ENCODE measurements at regions of chr20 and their contacts with region 1.

Region 1: GRCh38 chr20:45311589-45312211 is 3.6 kb upstream of the MATN4 start:
- DNase-seq: peak; percentile 92
- ATAC-seq: peak; percentile 68
- H3K4me3 Mint-ChIP-seq: peak overlapping the region; percentile 63
- H3K27ac Mint-ChIP-seq: no peak overlapping the region
- H3K4me1 Mint-ChIP-seq: peaks cover 15% of the 10 kb centered on the region
- H3K27me3 Mint-ChIP-seq: peaks cover 33% of the 10 kb centered on the region
- CTCF ChIP-seq: peak; percentile 71

Region 2: GRCh38 chr20:45300961-45301360 is 10.7 kb before region 1 on chr20:
- CTCF ChIA-PET with region 1: interaction called, 46 read pairs
- POLR2A ChIA-PET with region 1: interaction called, 3 read pairs
- DNase-seq: peak; percentile 82
- ATAC-seq: peak; percentile 96
- H3K4me3 Mint-ChIP-seq: no peak overlapping the region
- H3K27ac Mint-ChIP-seq: no peak overlapping the region
- H3K4me1 Mint-ChIP-seq: peaks cover 12% of the 10 kb centered on the region
- H3K27me3 Mint-ChIP-seq: peaks cover 10% of the 10 kb centered on the region
- CTCF ChIP-seq: peak; percentile 38; the same call in 1 of the 2 replicates

Region 3: GRCh38 chr20:45341939-45342859 is 30.5 kb after region 1 on chr20:
- CTCF ChIA-PET with region 1: interaction called, 11 read pairs
- POLR2A ChIA-PET with region 1: no interaction called
- DNase-seq: peak; percentile 82
- ATAC-seq: peak; percentile 72
- H3K4me3 Mint-ChIP-seq: peak overlapping the region; percentile 65
- H3K27ac Mint-ChIP-seq: peak overlapping the region; percentile 98
- H3K4me1 Mint-ChIP-seq: peaks cover 99% of the 10 kb centered on the region
- H3K27me3 Mint-ChIP-seq: no peaks in the 10 kb centered on the region
- CTCF ChIP-seq: no peak

Region 4: GRCh38 chr20:45347936-45348778 is 36.5 kb after region 1 on chr20 and contains the start of gene SDC4:
- CTCF ChIA-PET with region 1: interaction called, 11 read pairs
- POLR2A ChIA-PET with region 1: no interaction called
- DNase-seq: peak; percentile 68
- ATAC-seq: peak; percentile 63
- H3K4me3 Mint-ChIP-seq: peak within 1 kb of the TSS; percentile 89
- H3K27ac Mint-ChIP-seq: peak within 1 kb of the TSS; percentile 19
- H3K4me1 Mint-ChIP-seq: peaks cover 45% of the 10 kb centered on the region
- H3K27me3 Mint-ChIP-seq: no peaks in the 10 kb centered on the region
- CTCF ChIP-seq: no peak
- total RNA-seq, gene SDC4: 64.0 to 69.6 TPM (median 69.5 TPM) in 3 replicates

Measured in WTC11 (cell line).